ENCODE measurements at regions of chr2 and their contacts with region 1.

Region 1: DNA sequence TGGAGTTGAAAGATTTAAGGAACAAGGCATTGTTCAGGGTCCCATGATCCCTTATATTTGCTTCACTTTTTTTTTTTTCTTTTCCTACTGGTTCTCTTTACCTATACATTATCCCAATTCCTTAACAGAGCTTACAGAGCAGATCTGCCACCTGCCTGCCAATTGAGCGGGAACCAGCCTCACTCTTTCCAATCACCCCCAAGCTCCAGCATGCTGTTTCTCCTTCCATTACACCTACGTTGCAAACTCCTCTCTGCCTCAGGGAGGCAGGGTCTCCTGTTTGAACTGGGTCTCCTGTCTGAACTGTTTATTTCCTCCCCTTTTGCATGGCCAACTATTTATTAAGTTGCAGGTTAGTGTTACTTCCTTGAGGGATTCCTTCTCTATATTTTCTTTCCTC is 77.2 kb upstream of the SLC38A11 start:
- DNase-seq: no peak
- ATAC-seq: no peak
- H3K4me3 ChIP-seq: no peak overlapping the region
- H3K27ac ChIP-seq: no peak overlapping the region
- H3K4me1 ChIP-seq: no peaks in the 10 kb centered on the region
- H3K27me3 ChIP-seq: no peaks in the 10 kb centered on the region
- CTCF ChIP-seq: no peak
- EP300 ChIP-seq: no peak
- POLR2A ChIP-seq: no peak
- RAD21 ChIP-seq: no peak

Region 2: DNA sequence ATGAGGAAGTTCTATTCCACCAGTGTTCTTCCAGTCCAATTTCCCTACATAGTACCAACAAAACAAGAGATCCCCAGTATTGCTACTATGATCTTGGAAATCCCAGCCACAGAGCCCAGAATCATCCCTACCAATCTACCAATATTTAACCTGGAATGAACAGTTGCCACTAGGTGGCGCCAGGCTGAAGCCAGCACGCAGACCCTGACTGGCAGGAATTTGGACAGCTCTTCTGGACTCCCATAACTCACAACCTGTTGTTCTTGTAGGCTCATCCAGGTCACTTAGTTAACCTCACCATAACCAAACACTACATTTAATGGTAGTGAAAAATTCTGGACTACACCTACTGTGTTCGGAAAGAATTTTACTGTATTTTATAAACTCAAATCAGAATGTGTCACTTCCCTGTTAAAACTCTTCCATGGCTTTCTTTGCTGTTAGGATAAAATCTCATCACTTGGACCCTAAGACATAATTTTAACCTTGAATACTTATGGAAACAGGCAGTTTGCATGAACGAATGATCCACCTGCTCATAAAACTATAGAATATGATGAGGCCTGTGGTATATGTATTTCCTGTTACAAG is 17.4 kb before region 1 on chr2:
- CTCF ChIA-PET with region 1: interaction called, 11 read pairs
- POLR2A ChIA-PET with region 1: no interaction called
- RAD21 ChIA-PET with region 1: interaction called, 3 read pairs
- SMC1A ChIA-PET with region 1: interaction called, 3 read pairs
- in situ Hi-C with region 1: no loop called
- intact Hi-C with region 1: no loop called
- DNase-seq: no peak
- ATAC-seq: peak; percentile 95
- H3K4me3 ChIP-seq: no peak overlapping the region
- H3K27ac ChIP-seq: no peak overlapping the region
- H3K4me1 ChIP-seq: no peaks in the 10 kb centered on the region
- H3K27me3 ChIP-seq: no peaks in the 10 kb centered on the region
- CTCF ChIP-seq: peak; percentile 77 to 85 (median 80)
- EP300 ChIP-seq: no peak
- POLR2A ChIP-seq: no peak
- RAD21 ChIP-seq: peak; percentile 65

Measured in GM12878 (cell line).